Naive thymus-derived CD4-positive, alpha-beta T cell (primary cell): ENCODE measurements at regions of chrX and their contacts with region 1.

Region 1: GRCh38 chrX:74291964-74292807 is 11.8 kb upstream of the ZCCHC13 start:
- DNase-seq: peak; percentile 60 to 87 (median 80)
- ATAC-seq: peak; percentile 93
- H3K4me3 ChIP-seq: peak overlapping the region; percentile 94
- H3K4me3 Mint-ChIP-seq: peak overlapping the region; percentile 83 to 100 (median 96)
- H3K27ac ChIP-seq: peak overlapping the region; percentile 82
- H3K27ac Mint-ChIP-seq: peak overlapping the region; percentile 90 to 100 (median 96)
- H3K4me1 ChIP-seq: peaks cover 0 to 9% of the 10 kb centered on the region in 2 donors
- H3K4me1 Mint-ChIP-seq: peaks cover 0 to 31% (median 19%) of the 10 kb centered on the region in 7 donors
- H3K27me3 ChIP-seq: no peaks in the 10 kb centered on the region
- H3K27me3 Mint-ChIP-seq: no peaks in the 10 kb centered on the region

Region 2: GRCh38 chrX:73562984-73563737 is 729.0 kb before region 1 on chrX and contains the start of gene CHIC1:
- CTCF ChIA-PET with region 1: no interaction called
- POLR2A ChIA-PET with region 1: no interaction called
- intact Hi-C with region 1: loop called (anchors 1 to 2 kb)
- DNase-seq: peak; percentile 33 to 80 (median 71)
- ATAC-seq: peak; percentile 80
- H3K4me3 ChIP-seq: peak within 1 kb of the TSS; percentile 73
- H3K4me3 Mint-ChIP-seq: peak within 1 kb of the TSS; percentile 91 to 99 (median 96)
- H3K27ac ChIP-seq: peak within 1 kb of the TSS; percentile 81
- H3K27ac Mint-ChIP-seq: peak within 1 kb of the TSS; percentile 96 to 100 (median 98)
- H3K4me1 ChIP-seq: no peaks in the 10 kb centered on the region
- H3K4me1 Mint-ChIP-seq: peaks cover 7 to 26% (median 13%) of the 10 kb centered on the region in 7 donors
- H3K27me3 ChIP-seq: no peaks in the 10 kb centered on the region
- H3K27me3 Mint-ChIP-seq: no peaks in the 10 kb centered on the region
- total RNA-seq, gene CHIC1: 7.8 to 17.3 (median 10.7) TPM

Region 3: DNA sequence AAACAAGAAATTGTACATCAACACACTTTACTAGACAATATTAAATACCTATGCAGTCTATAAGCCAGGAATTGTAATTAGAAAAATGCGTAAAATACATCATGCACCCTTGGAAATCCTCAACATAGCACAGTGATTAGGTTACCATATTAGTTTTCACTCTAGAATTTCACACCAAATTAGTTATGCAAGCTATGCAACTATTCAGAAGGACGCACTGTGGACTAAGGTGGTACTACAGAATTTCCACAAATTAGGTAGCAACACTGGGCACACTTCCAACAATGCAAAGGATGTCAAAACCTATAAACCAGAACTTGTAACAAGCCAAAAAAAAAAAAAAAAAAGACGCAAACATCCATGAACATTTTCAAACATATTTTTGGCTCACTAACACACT is 59.3 kb before region 1 on chrX:
- CTCF ChIA-PET with region 1: no interaction called
- POLR2A ChIA-PET with region 1: no interaction called
- intact Hi-C with region 1: loop called in 1 of 2 experiments (anchors 5 kb)
- DNase-seq: peak in 2 of 9 donors; percentile 2 to 6
- ATAC-seq: no peak
- H3K4me3 ChIP-seq: no peak overlapping the region
- H3K4me3 Mint-ChIP-seq: no peak overlapping the region
- H3K27ac ChIP-seq: no peak overlapping the region
- H3K27ac Mint-ChIP-seq: no peak overlapping the region
- H3K4me1 ChIP-seq: no peaks in the 10 kb centered on the region
- H3K4me1 Mint-ChIP-seq: peaks cover 0 to 12% (median 4%) of the 10 kb centered on the region in 7 donors
- H3K27me3 ChIP-seq: no peaks in the 10 kb centered on the region
- H3K27me3 Mint-ChIP-seq: no peaks in the 10 kb centered on the region

Region 4: DNA sequence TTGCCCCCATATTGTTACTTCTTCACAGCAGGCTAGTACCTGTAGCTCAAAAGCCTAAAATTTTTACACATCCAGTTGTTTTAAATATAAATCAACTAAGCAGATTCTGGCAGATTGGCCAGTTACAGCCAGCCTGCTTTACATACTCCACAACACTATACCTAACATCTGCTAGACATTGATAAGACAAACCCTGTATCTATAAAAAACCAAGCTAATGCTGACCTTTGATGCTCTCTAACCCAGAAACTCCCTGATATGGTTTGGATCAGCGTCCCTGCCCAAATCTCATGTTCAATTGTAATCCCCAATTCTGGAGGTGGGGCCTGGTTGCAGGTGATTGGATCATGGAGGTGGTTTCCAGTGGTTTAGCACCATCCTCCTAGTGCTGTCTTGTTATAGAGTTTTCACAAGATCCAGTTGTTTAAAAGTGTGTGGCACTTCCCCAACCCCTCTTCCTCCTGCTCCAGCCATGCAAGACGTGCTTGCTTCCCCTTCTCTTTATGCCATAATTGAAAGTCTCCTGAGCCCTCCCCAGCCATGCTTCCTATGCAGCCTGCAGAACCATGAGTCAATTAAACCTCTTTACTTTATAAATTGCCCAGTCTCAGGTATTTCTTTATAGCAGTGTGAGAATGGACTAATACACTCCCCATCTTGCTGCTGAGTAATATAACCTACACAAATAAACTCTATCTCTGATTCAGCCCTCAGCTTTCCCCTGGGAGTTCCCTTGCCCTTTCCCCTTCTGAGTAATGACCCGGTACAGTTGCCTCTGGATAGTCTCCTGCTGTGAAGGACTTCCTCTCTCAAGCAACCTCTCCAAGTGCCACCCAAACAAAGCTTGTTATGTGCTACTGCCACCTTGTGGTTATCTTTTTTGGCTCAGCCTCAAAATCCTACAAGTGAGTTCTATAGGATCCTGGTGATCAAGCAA is 51.4 kb after region 1 on chrX:
- CTCF ChIA-PET with region 1: interaction called, 3 read pairs
- POLR2A ChIA-PET with region 1: no interaction called
- intact Hi-C with region 1: loop called (anchors 1 to 2 kb)
- DNase-seq: peak in 8 of 9 donors; percentile 17 to 59 (median 44)
- ATAC-seq: peak; percentile 82
- H3K4me3 ChIP-seq: no peak overlapping the region
- H3K4me3 Mint-ChIP-seq: no peak overlapping the region
- H3K27ac ChIP-seq: no peak overlapping the region
- H3K27ac Mint-ChIP-seq: peak overlapping the region in 1 of 9 donors; percentile 37
- H3K4me1 ChIP-seq: no peaks in the 10 kb centered on the region
- H3K4me1 Mint-ChIP-seq: peaks cover 0 to 5% (median 3%) of the 10 kb centered on the region in 7 donors
- H3K27me3 ChIP-seq: no peaks in the 10 kb centered on the region
- H3K27me3 Mint-ChIP-seq: peaks cover 0 to 4% (median 4%) of the 10 kb centered on the region in 5 donors

Region 5: GRCh38 chrX:74536152-74536831 is 244.1 kb after region 1 on chrX:
- CTCF ChIA-PET with region 1: no interaction called
- POLR2A ChIA-PET with region 1: no interaction called
- intact Hi-C with region 1: loop called (anchors 2 kb)
- DNase-seq: peak in 6 of 9 donors; percentile 6 to 35 (median 12)
- ATAC-seq: peak; percentile 73
- H3K4me3 ChIP-seq: peak overlapping the region; percentile 63
- H3K4me3 Mint-ChIP-seq: peak overlapping the region; percentile 75 to 89 (median 85)
- H3K27ac ChIP-seq: peak overlapping the region; percentile 54
- H3K27ac Mint-ChIP-seq: peak overlapping the region in 8 of 9 donors; percentile 51 to 80 (median 68)
- H3K4me1 ChIP-seq: peaks cover 0 to 3% of the 10 kb centered on the region in 2 donors
- H3K4me1 Mint-ChIP-seq: peaks cover 0 to 18% (median 7%) of the 10 kb centered on the region in 7 donors
- H3K27me3 ChIP-seq: no peaks in the 10 kb centered on the region
- H3K27me3 Mint-ChIP-seq: no peaks in the 10 kb centered on the region

Region 6: GRCh38 chrX:75273483-75273882 is 981.3 kb after region 1 on chrX:
- CTCF ChIA-PET with region 1: no interaction called
- POLR2A ChIA-PET with region 1: interaction called, 4 read pairs
- intact Hi-C with region 1: loop called in 1 of 2 experiments (anchors 5 kb)
- DNase-seq: no peak
- ATAC-seq: peak; percentile 52
- H3K4me3 ChIP-seq: peak overlapping the region; percentile 97
- H3K4me3 Mint-ChIP-seq: peak overlapping the region; percentile 89 to 99 (median 94)
- H3K27ac ChIP-seq: peak overlapping the region; percentile 95
- H3K27ac Mint-ChIP-seq: peak overlapping the region; percentile 87 to 98 (median 96)
- H3K4me1 ChIP-seq: peaks cover 7 to 9% of the 10 kb centered on the region in 2 donors
- H3K4me1 Mint-ChIP-seq: peaks cover 15 to 68% (median 48%) of the 10 kb centered on the region in 7 donors
- H3K27me3 ChIP-seq: no peaks in the 10 kb centered on the region
- H3K27me3 Mint-ChIP-seq: no peaks in the 10 kb centered on the region

Region 7: DNA sequence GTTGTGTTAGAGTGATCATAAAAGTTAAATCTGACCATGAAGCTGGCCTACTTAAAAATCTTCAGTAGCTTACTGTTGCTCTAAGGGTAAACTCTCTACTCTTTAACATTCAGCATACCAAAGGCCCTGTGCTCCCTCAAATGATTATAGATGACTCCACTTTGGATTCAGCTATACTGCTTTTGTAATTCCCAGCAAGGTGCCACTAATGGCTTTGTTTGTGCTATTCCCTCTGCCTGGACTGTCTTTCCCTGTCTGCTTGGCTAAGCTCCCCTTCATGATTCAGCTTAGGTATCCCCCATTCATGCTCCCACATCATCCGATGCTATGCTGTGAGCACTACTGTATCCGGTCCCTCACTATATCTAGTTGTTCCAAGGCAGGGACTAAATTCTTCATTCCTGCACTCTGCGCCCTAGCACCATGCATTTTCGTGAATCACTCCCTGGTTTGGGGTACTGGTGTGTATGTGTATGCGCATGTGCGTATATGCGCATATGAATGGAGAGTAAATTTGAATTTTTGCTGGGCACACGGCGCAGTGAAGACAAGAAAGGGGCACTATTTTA is 1880.2 kb after region 1 on chrX:
- CTCF ChIA-PET with region 1: no interaction called
- POLR2A ChIA-PET with region 1: no interaction called
- intact Hi-C with region 1: loop called in 1 of 2 experiments (anchors 5 kb)
- DNase-seq: no peak
- ATAC-seq: peak; percentile 56
- H3K4me3 ChIP-seq: peak overlapping the region; percentile 74
- H3K4me3 Mint-ChIP-seq: peak overlapping the region; percentile 87 to 97 (median 92)
- H3K27ac ChIP-seq: peak overlapping the region; percentile 81
- H3K27ac Mint-ChIP-seq: peak overlapping the region; percentile 92 to 97 (median 95)
- H3K4me1 ChIP-seq: peaks cover 19 to 20% of the 10 kb centered on the region in 2 donors
- H3K4me1 Mint-ChIP-seq: peaks cover 25 to 52% (median 48%) of the 10 kb centered on the region in 7 donors
- H3K27me3 ChIP-seq: no peaks in the 10 kb centered on the region
- H3K27me3 Mint-ChIP-seq: no peaks in the 10 kb centered on the region